A673 (cell line): ENCODE measurements at regions of chr19 and their contacts with region 1.

Region 1: DNA sequence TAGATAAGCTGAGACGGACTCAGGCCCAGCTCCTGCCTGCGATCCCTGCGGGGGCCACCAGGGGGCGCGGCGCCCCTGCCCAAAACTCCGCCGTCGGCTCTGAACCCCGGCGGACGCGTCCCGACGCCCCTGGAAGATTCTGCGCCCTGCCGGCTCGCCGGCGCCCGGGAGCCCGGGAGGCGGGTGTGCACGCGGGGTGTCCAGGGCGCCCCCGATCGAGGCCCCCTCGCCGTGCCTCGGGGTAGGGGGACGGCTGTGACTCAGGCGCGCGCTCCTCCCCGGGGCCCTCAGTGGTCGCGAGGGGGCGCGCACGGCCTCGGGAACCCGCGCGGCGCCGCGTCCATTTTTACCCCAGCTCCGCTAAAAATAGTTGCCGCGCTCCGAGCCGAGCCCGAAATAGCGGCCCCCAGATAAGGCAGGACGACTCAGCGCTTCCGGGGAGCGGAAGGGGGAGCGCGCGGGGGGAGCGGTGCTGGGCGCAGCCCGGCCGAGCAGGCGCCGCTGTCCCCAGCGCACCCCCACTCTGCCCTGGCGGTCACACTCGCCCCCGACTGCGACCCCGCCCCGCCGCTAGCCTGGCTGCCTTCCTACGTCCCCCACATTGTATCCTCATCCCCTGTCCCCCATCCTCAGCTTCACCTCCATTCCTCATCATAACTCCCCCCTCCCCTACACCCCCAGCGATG is 16.0 kb upstream of the ERCC1 start:
- DNase-seq: peak; percentile 87
- H3K4me3 ChIP-seq: peak overlapping the region; percentile 82
- H3K27ac ChIP-seq: peak overlapping the region; percentile 93
- H3K4me1 ChIP-seq: peaks cover 18% of the 10 kb centered on the region
- H3K27me3 ChIP-seq: no peaks in the 10 kb centered on the region
- CTCF ChIP-seq: peak; percentile 94

Region 2: DNA sequence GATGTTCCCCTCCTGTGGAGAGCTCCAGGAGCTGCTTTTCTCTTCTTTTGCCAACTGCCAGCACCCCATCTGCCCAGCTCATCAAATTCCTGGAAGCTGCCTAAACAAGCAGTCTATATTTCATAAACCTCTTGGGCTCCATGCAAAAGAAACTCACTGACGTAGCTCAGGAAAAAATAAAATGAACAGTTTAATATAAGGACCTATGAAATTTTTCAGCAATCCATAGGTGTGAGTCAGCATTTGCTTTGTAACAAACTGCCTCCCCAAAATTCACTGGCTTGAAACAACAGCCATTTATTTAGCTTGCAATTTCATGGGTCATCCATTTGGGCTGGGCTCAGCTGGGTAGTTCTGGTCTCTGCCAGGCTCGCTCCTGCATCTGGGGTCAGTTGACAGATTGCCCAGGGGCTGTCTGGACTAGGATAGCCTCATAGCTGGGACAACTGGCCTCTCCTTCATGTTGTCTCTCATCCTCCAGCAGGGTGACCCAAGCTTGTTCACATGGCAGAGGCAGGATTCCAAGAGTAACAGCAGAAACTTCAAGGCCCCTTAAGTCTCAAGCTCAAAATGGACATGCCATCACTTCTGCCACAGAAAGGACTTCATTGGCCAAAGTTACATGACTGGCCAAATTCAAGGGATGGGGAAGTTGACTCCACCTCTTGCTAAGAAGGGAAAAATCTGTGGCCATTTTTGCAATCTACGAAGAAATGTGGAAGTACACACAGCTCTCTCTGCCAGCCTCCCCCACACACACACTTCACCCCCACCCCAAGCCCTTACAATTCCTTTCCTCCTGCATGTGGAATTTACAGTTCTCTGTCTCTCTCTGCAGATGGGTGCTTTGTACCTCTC is 803.9 kb before region 1 on chr19:
- CTCF ChIA-PET with region 1: no interaction called
- POLR2A ChIA-PET with region 1: no interaction called
- intact Hi-C with region 1: no loop called
- DNase-seq: no peak
- H3K4me3 ChIP-seq: no peak overlapping the region
- H3K27ac ChIP-seq: no peak overlapping the region
- H3K4me1 ChIP-seq: peaks cover 3% of the 10 kb centered on the region
- H3K27me3 ChIP-seq: no peaks in the 10 kb centered on the region
- CTCF ChIP-seq: no peak

Region 3: GRCh38 chr19:45423589-45424190 is 16.0 kb before region 1 on chr19 and contains the start of gene ERCC1:
- CTCF ChIA-PET with region 1: interaction called, 10 read pairs
- POLR2A ChIA-PET with region 1: interaction called, 12 read pairs
- intact Hi-C with region 1: no loop called
- DNase-seq: peak; percentile 97
- H3K4me3 ChIP-seq: peak within 1 kb of the TSS; percentile 63
- H3K27ac ChIP-seq: peak within 1 kb of the TSS; percentile 89
- H3K4me1 ChIP-seq: peaks cover 16% of the 10 kb centered on the region
- H3K27me3 ChIP-seq: no peaks in the 10 kb centered on the region
- CTCF ChIP-seq: no peak
- total RNA-seq, gene ERCC1: 158 and 165 TPM in 2 replicates

Region 4: DNA sequence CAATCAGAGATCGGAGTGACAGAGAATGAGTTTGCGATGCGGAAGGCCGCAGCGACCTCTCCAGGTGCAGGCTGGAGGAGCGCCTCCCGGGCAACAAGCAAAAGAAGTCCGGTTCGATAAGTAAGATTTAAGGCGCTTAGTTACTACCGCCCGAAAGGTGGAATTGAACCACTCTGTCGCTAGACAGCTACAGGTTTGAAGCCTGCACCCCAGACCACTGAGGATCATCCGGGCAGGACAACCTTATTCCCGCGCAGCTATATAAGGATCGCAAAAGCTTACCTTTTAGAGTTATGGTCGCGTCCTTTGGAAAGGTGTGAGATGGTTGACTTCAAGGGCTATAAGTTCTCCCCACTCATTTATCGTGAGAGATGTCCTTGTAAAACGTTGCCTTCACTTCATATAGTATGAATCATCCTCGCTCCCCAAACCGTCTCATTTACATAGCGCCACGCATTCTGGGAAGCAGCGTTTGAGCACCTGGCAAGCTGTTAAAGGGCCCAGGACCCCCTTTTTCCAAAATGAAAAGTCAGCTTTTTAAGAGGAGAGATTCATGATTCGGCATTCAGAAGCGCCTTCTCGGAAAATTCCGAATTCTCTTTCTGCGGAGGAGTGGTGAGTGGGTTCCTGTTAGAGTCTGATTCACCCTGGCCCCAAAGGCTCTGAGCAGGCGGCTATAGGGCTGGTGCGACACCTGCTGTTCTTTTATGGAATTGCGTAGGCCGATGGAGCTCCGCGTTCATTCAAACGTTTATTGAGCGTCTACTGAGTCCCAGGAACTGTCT is 38.9 kb after region 1 on chr19:
- CTCF ChIA-PET with region 1: interaction called, 99 read pairs
- POLR2A ChIA-PET with region 1: interaction called, 5 read pairs
- intact Hi-C with region 1: loop called (anchors 1 kb)
- DNase-seq: peak; percentile 95
- H3K4me3 ChIP-seq: peak overlapping the region; percentile 51
- H3K27ac ChIP-seq: peak overlapping the region; percentile 95
- H3K4me1 ChIP-seq: peaks cover 5% of the 10 kb centered on the region
- H3K27me3 ChIP-seq: no peaks in the 10 kb centered on the region
- CTCF ChIP-seq: peak; percentile 96

Region 5: DNA sequence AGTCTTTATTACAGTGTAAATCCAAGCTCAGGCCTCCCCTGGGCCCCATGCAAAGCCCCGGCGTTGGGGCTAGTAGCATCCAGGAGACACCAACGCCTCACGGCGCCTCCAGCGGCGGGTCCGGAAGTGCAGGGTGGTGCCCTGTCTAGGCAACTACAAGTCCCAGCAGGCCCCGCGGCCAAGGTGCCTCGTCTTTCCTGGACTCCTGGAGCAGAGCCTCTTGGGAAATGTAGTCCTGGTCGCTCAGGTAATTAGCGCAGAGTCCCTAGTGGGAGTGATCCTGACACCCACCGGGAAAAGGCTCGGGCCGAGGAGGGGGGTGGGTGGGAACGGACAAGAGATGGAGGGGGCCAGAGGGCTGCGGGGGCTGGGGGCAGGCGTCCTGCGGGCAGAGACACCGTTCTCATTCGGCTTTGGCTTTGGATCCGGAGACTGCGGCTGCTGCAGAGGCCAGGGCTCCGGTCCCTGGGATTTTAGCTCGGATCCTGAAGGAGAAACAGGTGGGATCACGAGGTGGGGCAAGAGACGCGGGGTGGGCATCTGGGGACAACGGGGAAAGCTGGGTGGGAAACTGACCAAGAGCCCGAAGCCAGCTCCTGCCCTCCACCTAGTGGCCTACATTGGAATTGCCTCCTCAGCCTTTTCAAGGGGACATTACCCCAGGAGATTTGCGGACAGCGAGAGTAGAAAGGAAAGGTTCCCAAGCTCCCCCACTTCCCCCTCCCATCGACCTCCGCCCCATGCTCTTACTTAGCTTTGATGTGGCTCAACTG is 45.8 kb after region 1 on chr19:
- CTCF ChIA-PET with region 1: interaction called, 99 read pairs
- POLR2A ChIA-PET with region 1: no interaction called
- intact Hi-C with region 1: no loop called
- DNase-seq: peak; percentile 98
- H3K4me3 ChIP-seq: peak overlapping the region; percentile 64
- H3K27ac ChIP-seq: peak overlapping the region; percentile 68
- H3K4me1 ChIP-seq: no peaks in the 10 kb centered on the region
- H3K27me3 ChIP-seq: no peaks in the 10 kb centered on the region
- CTCF ChIP-seq: peak; percentile 79

Region 6: GRCh38 chr19:45506246-45506990 is 66.7 kb after region 1 on chr19:
- CTCF ChIA-PET with region 1: no interaction called
- POLR2A ChIA-PET with region 1: no interaction called
- intact Hi-C with region 1: no loop called
- DNase-seq: peak; percentile 95
- H3K4me3 ChIP-seq: peak overlapping the region; percentile 93
- H3K27ac ChIP-seq: peak overlapping the region; percentile 83
- H3K4me1 ChIP-seq: peaks cover 10% of the 10 kb centered on the region
- H3K27me3 ChIP-seq: no peaks in the 10 kb centered on the region
- CTCF ChIP-seq: peak; percentile 73